Breast epithelium (tissue), 4 donors: ENCODE measurements at regions of chr5 and their contacts with region 1.

Region 1: DNA sequence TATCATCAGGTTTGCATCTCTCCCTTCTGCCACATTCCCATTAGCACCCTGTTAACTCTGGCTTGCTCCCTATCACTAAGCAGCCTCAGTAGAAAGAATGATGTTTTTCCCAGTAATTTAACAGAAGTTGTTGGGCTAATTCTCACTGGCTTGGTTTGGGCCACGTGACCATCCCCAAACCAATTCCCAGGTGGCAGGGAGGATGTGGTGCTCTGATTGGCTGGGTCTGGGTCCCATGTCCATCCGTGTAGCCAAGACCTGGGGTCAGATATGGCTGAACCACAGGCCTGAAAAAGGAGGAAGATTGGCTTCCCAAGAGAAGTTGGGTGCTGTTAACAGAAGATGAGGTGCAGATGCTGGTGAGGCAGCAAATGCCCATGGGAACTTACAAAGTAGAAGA is 122.0 kb downstream of the BOD1 start:
- DNase-seq: no peak
- H3K4me3 ChIP-seq: no peak overlapping the region
- H3K27ac ChIP-seq: peak overlapping the region in 1 of 2 donors; percentile 25
- H3K4me1 ChIP-seq: peaks cover 3 to 9% of the 10 kb centered on the region in 2 donors
- H3K27me3 ChIP-seq: no peaks in the 10 kb centered on the region
- CTCF ChIP-seq: no peak
- POLR2A ChIP-seq: no peak

Region 2: DNA sequence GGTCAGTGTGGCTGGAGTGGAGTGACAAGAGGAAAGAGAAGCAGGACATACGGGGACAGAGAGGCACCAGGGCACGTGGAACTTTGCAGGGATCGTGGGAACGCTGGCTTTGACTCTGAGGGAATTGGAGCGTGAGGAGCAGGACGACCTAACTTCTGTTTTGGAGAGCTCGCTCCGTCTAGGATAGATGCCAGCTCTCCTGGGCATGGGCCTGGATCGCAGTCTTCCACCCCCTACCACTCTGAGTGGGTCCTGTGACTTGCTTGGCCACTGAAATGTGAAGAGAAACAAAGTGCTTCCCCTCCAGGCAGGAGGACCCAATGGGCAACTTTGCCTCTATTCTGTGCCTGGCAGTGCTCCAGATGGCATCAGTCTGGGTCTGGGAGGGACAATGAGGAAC is 1031.4 kb before region 1 on chr5:
- intact Hi-C with region 1: no loop called
- DNase-seq: no peak
- H3K4me3 ChIP-seq: no peak overlapping the region
- H3K27ac ChIP-seq: no peak overlapping the region
- H3K4me1 ChIP-seq: no peaks in the 10 kb centered on the region
- H3K27me3 ChIP-seq: no peaks in the 10 kb centered on the region
- CTCF ChIP-seq: no peak
- POLR2A ChIP-seq: no peak

Region 3: DNA sequence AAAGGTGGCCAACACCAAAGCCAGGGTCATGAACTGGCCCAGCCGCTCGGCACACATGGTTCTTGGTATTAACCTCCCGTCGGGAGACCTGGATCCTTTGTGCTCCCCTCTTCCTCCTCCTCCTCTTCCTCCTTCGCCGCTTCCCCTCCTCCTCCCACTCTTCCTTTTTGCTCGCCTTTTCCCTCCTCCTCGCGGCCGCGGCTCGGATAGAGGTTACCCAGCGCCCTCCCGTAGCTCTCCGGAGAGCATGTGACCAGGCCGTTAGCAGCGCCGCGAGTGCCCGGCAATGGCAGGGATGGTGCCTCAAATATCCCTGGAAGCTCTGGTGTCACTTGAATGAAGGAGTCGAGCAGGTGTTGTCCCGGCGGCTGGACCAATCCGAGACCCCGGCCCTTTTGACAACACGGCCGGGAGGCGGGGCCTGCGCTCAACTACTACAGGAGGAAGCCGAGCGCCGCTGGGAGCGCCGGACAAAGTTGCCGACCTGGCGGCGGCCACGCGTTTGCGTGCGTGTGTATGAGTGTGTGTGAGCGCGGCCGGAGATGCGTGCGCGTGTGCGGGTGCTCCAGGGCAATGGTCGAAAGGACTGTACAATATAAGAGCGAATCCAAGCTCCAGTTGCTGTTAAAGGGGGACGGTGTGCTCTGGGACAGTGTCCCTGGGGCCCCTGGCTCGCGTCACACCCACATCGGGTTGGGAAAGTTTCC is 166.2 kb before region 1 on chr5 and contains the start of gene STC2:
- intact Hi-C with region 1: loop called (anchors 5 kb)
- DNase-seq: peak; percentile 95
- H3K4me3 ChIP-seq: peak within 1 kb of the TSS; percentile 25 to 78 (median 63)
- H3K27ac ChIP-seq: peak within 1 kb of the TSS; percentile 77 to 92
- H3K4me1 ChIP-seq: peaks cover 0 to 4% of the 10 kb centered on the region in 2 donors
- H3K27me3 ChIP-seq: peaks cover 2 to 37% of the 10 kb centered on the region in 2 donors
- CTCF ChIP-seq: peak in 1 of 3 donors; percentile 10
- POLR2A ChIP-seq: peak; percentile 66
- total RNA-seq, gene STC2: 12.8 to 502 (median 347) TPM

Region 4: DNA sequence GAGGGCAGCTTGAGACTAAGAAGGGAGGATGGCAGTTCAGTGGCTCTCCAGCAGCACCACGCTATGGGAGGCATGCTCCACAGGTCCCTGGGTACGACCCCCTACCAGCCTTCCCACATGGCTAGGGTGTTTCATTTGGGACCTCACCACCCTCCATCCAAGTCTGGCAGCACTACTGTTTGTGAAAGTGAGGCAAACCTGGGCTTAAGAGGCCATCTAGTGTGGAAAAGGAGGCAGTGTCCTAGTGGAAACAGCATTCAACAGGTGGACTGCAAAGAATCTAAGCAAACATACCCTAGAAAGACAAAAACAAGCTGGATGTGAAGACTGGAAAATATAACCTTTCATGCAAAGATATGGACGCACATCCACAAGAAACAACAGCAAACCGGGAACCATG is 489.8 kb after region 1 on chr5:
- intact Hi-C with region 1: no loop called
- DNase-seq: no peak
- H3K4me3 ChIP-seq: no peak overlapping the region
- H3K27ac ChIP-seq: no peak overlapping the region
- H3K4me1 ChIP-seq: no peaks in the 10 kb centered on the region
- H3K27me3 ChIP-seq: no peaks in the 10 kb centered on the region
- CTCF ChIP-seq: peak in 1 of 3 donors; percentile 35
- POLR2A ChIP-seq: no peak